AG04450 (cell line): ENCODE measurements at regions of chr20 and their contacts with region 1.

Region 1: GRCh38 chr20:50929299-50930138 is 1.7 kb downstream of the ADNP start:
- DNase-seq: peak; percentile 92
- H3K4me3 ChIP-seq: peak overlapping the region; percentile 86
- H3K27ac ChIP-seq: peak overlapping the region; percentile 13
- H3K27me3 ChIP-seq: no peaks in the 10 kb centered on the region
- CTCF ChIP-seq: peak; percentile 99

Region 2: GRCh38 chr20:50891138-50891537 is 38.4 kb before region 1 on chr20:
- CTCF ChIA-PET with region 1: interaction called, 12 read pairs
- POLR2A ChIA-PET with region 1: no interaction called
- DNase-seq: no peak
- H3K4me3 ChIP-seq: no peak overlapping the region
- H3K27ac ChIP-seq: no peak overlapping the region
- H3K27me3 ChIP-seq: no peaks in the 10 kb centered on the region
- CTCF ChIP-seq: no peak

Region 3: GRCh38 chr20:50898475-50898874 is 31.0 kb before region 1 on chr20:
- CTCF ChIA-PET with region 1: interaction called, 12 read pairs
- POLR2A ChIA-PET with region 1: no interaction called
- DNase-seq: no peak
- H3K4me3 ChIP-seq: no peak overlapping the region
- H3K27ac ChIP-seq: no peak overlapping the region
- H3K27me3 ChIP-seq: no peaks in the 10 kb centered on the region
- CTCF ChIP-seq: no peak

Region 4: GRCh38 chr20:50913690-50914375 is 15.7 kb before region 1 on chr20:
- CTCF ChIA-PET with region 1: interaction called, 39 read pairs
- POLR2A ChIA-PET with region 1: interaction called, 13 read pairs
- DNase-seq: peak; percentile 51
- H3K4me3 ChIP-seq: no peak overlapping the region
- H3K27ac ChIP-seq: no peak overlapping the region
- H3K27me3 ChIP-seq: no peaks in the 10 kb centered on the region
- CTCF ChIP-seq: no peak

Region 5: DNA sequence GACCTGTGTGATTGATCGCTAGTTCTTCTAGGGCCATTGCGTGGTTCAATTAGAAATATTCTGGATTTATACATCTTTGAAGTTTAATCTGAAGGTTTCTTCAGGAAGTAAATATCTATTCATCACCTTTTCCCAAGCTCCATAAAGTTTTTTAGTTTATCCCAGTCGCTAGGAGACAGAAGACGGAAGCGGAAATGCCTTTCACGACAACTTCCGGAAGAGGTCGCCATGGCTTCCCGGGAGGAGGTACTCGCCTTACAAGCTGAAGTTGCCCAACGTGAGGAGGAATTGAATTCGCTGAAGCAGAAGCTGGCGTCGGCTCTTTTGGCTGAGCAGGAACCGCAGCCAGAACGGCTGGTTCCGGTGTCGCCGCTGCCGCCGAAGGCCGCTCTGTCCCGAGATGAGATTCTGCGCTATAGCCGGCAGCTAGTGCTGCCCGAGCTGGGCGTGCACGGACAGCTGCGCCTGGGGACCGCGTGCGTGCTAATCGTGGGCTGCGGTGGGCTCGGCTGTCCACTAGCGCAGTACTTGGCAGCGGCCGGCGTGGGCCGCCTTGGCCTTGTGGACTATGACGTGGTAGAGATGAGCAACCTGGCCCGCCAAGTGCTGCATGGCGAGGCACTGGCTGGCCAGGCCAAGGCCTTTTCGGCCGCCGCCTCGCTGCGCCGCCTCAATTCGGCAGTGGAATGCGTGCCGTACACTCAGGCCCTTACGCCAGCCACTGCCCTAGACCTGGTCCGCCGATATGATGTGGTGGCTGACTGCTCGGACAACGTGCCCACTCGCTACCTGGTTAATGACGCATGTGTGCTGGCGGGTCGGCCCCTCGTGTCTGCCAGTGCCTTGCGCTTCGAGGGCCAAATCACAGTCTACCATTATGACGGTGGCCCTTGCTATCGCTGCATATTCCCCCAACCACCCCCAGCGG is 29.4 kb after region 1 on chr20 and contains the start of gene MOCS3:
- CTCF ChIA-PET with region 1: interaction called, 9 read pairs
- POLR2A ChIA-PET with region 1: interaction called, 17 read pairs
- DNase-seq: peak; percentile 81
- H3K4me3 ChIP-seq: peak within 1 kb of the TSS; percentile 77
- H3K27ac ChIP-seq: peak within 1 kb of the TSS; percentile 79
- H3K27me3 ChIP-seq: no peaks in the 10 kb centered on the region
- CTCF ChIP-seq: no peak
- polyA plus RNA-seq, gene MOCS3: 3.8 and 4.0 TPM in 2 replicates

Region 6: GRCh38 chr20:51135926-51136715 is 206.6 kb after region 1 on chr20:
- CTCF ChIA-PET with region 1: no interaction called
- POLR2A ChIA-PET with region 1: no interaction called
- DNase-seq: no peak
- H3K4me3 ChIP-seq: no peak overlapping the region
- H3K27ac ChIP-seq: no peak overlapping the region
- H3K27me3 ChIP-seq: peaks cover 6% of the 10 kb centered on the region
- CTCF ChIP-seq: no peak